IMR-90 (cell line): ENCODE measurements at regions of chr5 and their contacts with region 1.

Region 1: GRCh38 chr5:95730730-95731570 is at the start of gene RHOBTB3:
- DNase-seq: peak; percentile 91
- ATAC-seq: peak; percentile 75
- H3K4me3 ChIP-seq: peak within 1 kb of the TSS; percentile 98
- H3K27ac ChIP-seq: peak within 1 kb of the TSS; percentile 100
- H3K4me1 ChIP-seq: peaks cover 14% of the 10 kb centered on the region
- H3K27me3 ChIP-seq: no peaks in the 10 kb centered on the region
- CTCF ChIP-seq: no peak
- POLR2A ChIP-seq: peak; percentile 63; the same call in 1 of the 2 replicates
- RAD21 ChIP-seq: no peak; the same call in 1 of the 2 replicates
- total RNA-seq, gene RHOBTB3: 356 and 447 TPM in 2 replicates

Region 2: DNA sequence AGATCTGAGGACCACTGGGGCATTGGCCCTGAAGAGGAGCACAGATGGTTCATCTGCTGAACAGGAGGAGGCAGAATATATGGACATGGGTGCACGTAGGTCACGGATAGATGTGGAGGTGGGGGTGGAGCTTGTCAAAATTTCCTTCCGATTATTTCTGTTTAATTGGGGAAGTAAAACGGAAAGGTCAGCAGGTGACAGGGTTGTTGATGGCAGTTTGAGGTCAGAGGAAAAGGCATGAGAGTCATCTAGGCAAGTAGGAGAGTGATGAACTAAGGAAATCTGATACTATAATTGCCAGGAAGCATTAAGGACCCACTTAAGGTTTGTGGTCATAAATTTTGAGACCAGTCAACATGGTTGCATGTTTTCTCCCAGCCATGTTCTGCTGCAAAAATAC is 348.1 kb before region 1 on chr5:
- CTCF ChIA-PET with region 1: no interaction called
- POLR2A ChIA-PET with region 1: no interaction called
- dilution Hi-C with region 1: no loop called
- in situ Hi-C with region 1: no loop called
- intact Hi-C with region 1: no loop called
- DNase-seq: no peak
- ATAC-seq: no peak
- H3K4me3 ChIP-seq: no peak overlapping the region
- H3K27ac ChIP-seq: no peak overlapping the region
- H3K4me1 ChIP-seq: no peaks in the 10 kb centered on the region
- H3K27me3 ChIP-seq: no peaks in the 10 kb centered on the region; the same call in 1 of the 2 replicates
- CTCF ChIP-seq: no peak
- POLR2A ChIP-seq: no peak
- RAD21 ChIP-seq: no peak

Region 3: DNA sequence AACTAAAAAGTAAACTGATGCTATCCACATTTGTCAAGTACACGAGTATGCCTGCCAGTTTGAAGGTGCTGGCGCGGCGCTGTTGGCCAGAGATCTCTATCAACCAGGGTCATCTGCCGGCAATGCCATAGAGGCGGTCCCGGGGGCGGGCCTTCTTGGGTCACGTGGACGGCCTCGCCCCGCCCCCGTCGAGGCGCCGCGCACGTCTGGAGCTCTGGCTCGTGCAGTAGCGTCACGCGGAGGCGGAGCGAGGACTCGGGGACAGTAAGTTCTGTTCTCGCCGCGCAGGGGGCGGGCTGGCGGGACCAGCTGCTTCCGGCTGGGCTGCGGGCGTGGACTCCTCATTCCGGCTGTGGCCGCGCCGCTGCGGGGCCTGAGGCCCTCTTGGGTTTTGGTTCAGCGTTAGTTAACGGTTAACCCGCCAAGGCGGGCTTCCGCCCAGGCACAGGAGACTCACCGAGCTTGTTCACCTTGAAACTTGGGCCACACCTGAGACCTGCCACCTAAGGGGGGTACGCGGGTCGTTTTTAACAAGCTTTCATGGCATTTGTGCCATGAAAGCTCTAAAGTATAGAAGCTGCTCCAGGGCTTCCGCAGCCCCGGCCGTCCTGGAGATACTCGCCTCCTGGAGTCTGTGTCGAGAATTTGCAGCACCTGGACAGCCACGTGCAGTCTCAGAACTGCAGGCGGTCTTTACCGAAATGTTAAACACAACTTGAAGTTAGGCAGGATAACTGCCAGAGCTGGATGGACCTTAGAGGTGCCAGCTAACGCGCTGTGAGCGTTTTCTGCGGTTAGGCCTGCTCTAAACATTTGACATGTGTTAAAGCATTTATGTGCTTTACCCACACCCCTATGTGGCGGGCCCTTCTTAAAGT is 84.2 kb before region 1 on chr5 and contains the start of gene RFESD:
- CTCF ChIA-PET with region 1: interaction called, 3 read pairs
- POLR2A ChIA-PET with region 1: no interaction called
- dilution Hi-C with region 1: no loop called
- in situ Hi-C with region 1: no loop called
- intact Hi-C with region 1: loop called (anchors 5 kb)
- DNase-seq: peak; percentile 93
- ATAC-seq: peak; percentile 96
- H3K4me3 ChIP-seq: peak within 1 kb of the TSS; percentile 55
- H3K27ac ChIP-seq: peak within 1 kb of the TSS; percentile 59
- H3K4me1 ChIP-seq: peaks cover 4% of the 10 kb centered on the region
- H3K27me3 ChIP-seq: no peaks in the 10 kb centered on the region
- CTCF ChIP-seq: peak; percentile 10; the same call in 1 of the 2 replicates
- POLR2A ChIP-seq: peak; percentile 83; the same call in 1 of the 2 replicates
- RAD21 ChIP-seq: no peak
- total RNA-seq, gene RFESD: 2.7 and 3.6 TPM in 2 replicates

Region 4: GRCh38 chr5:95669540-95669939 is 61.4 kb before region 1 on chr5:
- CTCF ChIA-PET with region 1: interaction called, 16 read pairs
- POLR2A ChIA-PET with region 1: interaction called, 7 read pairs
- dilution Hi-C with region 1: no loop called
- in situ Hi-C with region 1: loop called (anchors 5 kb)
- intact Hi-C with region 1: loop called (anchors 1 kb)
- DNase-seq: peak; percentile 99
- ATAC-seq: peak; percentile 91
- H3K4me3 ChIP-seq: no peak overlapping the region
- H3K27ac ChIP-seq: peak overlapping the region; percentile 54; the same call in 1 of the 2 replicates
- H3K4me1 ChIP-seq: peaks cover 15% of the 10 kb centered on the region
- H3K27me3 ChIP-seq: no peaks in the 10 kb centered on the region
- CTCF ChIP-seq: no peak
- POLR2A ChIP-seq: no peak
- RAD21 ChIP-seq: 0 out of 2 replicates have a peak, but pooled peaks have one; percentile 1

Region 5: GRCh38 chr5:95822542-95823181 is 91.7 kb after region 1 on chr5 and contains the start of gene GLRX:
- CTCF ChIA-PET with region 1: no interaction called
- POLR2A ChIA-PET with region 1: interaction called, 7 read pairs
- dilution Hi-C with region 1: no loop called
- in situ Hi-C with region 1: no loop called
- intact Hi-C with region 1: loop called (anchors 2 kb)
- DNase-seq: peak; percentile 89
- ATAC-seq: peak; percentile 70
- H3K4me3 ChIP-seq: peak within 1 kb of the TSS; percentile 92
- H3K27ac ChIP-seq: peak within 1 kb of the TSS; percentile 96
- H3K4me1 ChIP-seq: peaks cover 25% of the 10 kb centered on the region
- H3K27me3 ChIP-seq: no peaks in the 10 kb centered on the region
- CTCF ChIP-seq: no peak
- POLR2A ChIP-seq: peak; percentile 80
- RAD21 ChIP-seq: no peak
- total RNA-seq, gene GLRX: 142 and 145 TPM in 2 replicates